Activated CD4-positive, alpha-beta memory T cell treated with anti-CD3 and anti-CD28 coated beads, Interleukin-2, amount 10 ng/mL, durations not matched to agents 7 days and 5 days (primary cell): ENCODE measurements at regions of chr3 and their contacts with region 1.

Region 1: GRCh38 chr3:195442573-195443390 is at the start of gene ACAP2:
- DNase-seq: peak; percentile 99
- H3K4me3 Mint-ChIP-seq: peak within 1 kb of the TSS; percentile 94
- H3K27ac Mint-ChIP-seq: peak within 1 kb of the TSS; percentile 92
- H3K4me1 Mint-ChIP-seq: peaks cover 44% of the 10 kb centered on the region
- H3K27me3 Mint-ChIP-seq: no peaks in the 10 kb centered on the region
- total RNA-seq, gene ACAP2: 76.0 to 77.4 TPM

Region 2: DNA sequence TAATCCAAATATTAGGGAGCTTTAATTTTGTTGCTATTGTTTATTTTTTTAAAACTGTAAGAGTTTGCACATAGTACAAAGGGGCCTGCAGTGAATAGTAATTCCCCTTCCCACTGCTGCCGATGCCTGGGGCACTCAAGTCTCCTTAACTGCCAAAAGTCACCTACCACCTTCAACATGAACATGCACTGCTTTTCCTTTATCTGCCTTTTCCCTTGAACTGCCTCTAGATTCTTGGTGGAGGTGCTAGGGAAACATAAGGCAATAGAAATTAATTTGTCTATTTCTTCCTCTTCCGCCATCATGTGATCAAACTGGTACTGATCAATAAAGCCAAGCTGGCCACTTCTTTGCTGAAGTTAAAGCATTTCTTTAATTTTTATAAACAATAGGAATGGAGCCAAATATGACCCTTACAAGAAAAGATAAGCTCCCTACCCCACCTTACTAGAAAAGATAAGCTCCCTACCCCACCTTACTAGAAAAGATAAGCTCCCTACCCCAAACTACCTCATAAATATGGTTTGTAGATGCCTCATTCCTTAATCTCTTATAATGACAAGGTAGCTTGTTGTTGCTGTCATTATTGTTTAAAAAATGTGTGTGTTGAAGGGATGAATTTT is 17.4 kb after region 1 on chr3:
- CTCF ChIA-PET with region 1: interaction called, 3 read pairs
- POLR2A ChIA-PET with region 1: interaction called, 10 read pairs
- DNase-seq: no peak
- H3K4me3 Mint-ChIP-seq: no peak overlapping the region
- H3K27ac Mint-ChIP-seq: no peak overlapping the region
- H3K4me1 Mint-ChIP-seq: peaks cover 12% of the 10 kb centered on the region
- H3K27me3 Mint-ChIP-seq: no peaks in the 10 kb centered on the region

Region 3: DNA sequence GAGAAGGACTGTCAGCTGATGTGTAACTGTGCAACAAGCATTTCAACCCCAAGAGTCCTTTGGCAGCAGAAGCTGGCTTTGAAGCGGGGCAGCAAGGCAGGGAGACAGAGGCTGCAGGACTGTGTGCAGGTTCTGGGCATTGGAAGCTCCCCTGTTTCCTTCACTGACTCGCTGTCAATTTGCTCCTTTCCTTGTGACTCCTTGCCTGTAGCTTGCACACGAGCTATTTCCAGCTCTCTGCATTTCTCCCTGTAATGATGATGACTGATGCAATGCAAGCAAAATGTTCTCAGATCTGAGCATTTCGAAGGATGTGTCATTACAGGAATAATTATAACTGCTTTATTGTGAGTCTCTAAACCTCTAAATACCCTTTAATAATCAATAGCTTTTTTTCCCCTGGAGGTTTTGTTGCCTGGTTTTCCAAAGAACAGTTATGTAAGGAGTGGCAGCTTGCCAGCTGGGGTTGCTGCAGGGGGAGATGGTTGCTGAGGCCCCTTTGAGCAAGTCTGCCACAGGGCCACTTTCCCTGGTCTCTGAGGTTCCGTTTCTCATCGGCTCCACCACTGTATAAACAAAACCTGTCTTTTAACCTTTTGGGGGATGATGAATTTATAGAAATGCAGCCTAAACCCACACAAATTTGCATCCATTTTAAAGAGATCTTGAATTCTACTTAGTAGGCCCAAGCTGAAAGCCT is 138.1 kb after region 1 on chr3:
- CTCF ChIA-PET with region 1: no interaction called
- POLR2A ChIA-PET with region 1: no interaction called
- DNase-seq: no peak
- H3K4me3 Mint-ChIP-seq: no peak overlapping the region
- H3K27ac Mint-ChIP-seq: no peak overlapping the region
- H3K4me1 Mint-ChIP-seq: peaks cover 11% of the 10 kb centered on the region
- H3K27me3 Mint-ChIP-seq: peaks cover 7% of the 10 kb centered on the region